HEK293T (cell line): ENCODE measurements at regions of chr2 and their contacts with region 1.

Region 1: DNA sequence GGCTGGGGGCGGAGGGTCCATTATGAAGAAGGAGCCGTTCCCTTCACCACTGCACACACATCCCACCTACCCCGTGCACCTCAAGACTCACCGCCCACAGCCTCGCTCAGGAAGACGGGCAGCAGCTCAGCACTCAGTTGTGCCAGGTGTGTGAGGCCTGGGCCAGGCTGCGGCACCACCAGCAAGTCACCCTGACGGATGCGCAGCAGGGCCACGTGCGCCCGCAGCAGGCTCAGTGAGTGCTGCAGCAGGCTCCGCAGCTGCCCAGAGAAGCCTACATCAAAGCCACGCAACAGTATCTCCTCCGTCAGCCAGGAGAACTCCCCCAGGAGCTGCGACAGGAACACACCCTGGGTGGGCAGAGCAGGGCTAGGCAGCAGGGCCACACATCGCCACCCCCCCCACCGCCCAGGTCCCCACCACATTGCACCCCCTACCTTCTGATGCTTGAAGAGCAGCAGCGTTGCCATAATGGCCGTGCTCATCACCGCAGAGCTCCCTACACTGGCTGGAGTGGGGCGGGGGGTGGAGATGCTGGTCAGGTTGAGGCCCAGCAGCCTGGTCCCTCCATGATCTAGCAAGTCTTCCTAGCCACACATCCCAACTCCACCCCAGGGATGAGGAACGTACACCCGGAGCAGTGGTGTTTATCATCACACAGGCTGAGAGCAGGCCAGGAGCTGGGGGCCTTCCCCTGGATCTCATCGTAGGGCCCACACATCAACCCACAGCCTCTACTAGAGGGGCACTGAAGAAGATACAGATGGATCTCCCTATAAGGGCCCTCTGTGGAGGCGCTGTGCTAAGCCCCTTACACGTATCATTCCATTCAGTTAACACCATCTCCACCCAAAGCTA is 10.2 kb downstream of the GPAT2 start:
- DNase-seq: no peak

Region 2: GRCh38 chr2:96116879-96117697 is 92.5 kb after region 1 on chr2:
- CTCF ChIA-PET with region 1: interaction called, 12 read pairs
- POLR2A ChIA-PET with region 1: no interaction called
- DNase-seq: peak; percentile 93

Region 3: GRCh38 chr2:96174251-96175144 is 149.9 kb after region 1 on chr2:
- CTCF ChIA-PET with region 1: interaction called, 31 read pairs
- POLR2A ChIA-PET with region 1: interaction called, 3 read pairs
- DNase-seq: peak; percentile 83